Motor neuron (in vitro differentiated cells): ENCODE measurements at regions of chr14 and their contacts with region 1.

Region 1: GRCh38 chr14:77862154-77862786 is 62.4 kb downstream of the ADCK1 start:
- ATAC-seq: peak; percentile 70 to 91 (median 84)
- H3K4me3 ChIP-seq: no peak overlapping the region
- H3K27ac ChIP-seq: peak overlapping the region in 1 of 2 donors; percentile 18
- H3K4me1 ChIP-seq: peaks cover 8 to 12% of the 10 kb centered on the region in 2 donors

Region 2: GRCh38 chr14:77478796-77479195 is 383.5 kb before region 1 on chr14:
- in situ Hi-C with region 1: no loop called
- ATAC-seq: no peak
- H3K4me3 ChIP-seq: no peak overlapping the region
- H3K27ac ChIP-seq: no peak overlapping the region
- H3K4me1 ChIP-seq: no peaks in the 10 kb centered on the region

Region 3: GRCh38 chr14:77704740-77705139 is 157.5 kb before region 1 on chr14:
- in situ Hi-C with region 1: no loop called
- ATAC-seq: no peak
- H3K4me3 ChIP-seq: no peak overlapping the region
- H3K27ac ChIP-seq: no peak overlapping the region
- H3K4me1 ChIP-seq: peaks cover 14 to 15% of the 10 kb centered on the region in 2 donors

Region 4: DNA sequence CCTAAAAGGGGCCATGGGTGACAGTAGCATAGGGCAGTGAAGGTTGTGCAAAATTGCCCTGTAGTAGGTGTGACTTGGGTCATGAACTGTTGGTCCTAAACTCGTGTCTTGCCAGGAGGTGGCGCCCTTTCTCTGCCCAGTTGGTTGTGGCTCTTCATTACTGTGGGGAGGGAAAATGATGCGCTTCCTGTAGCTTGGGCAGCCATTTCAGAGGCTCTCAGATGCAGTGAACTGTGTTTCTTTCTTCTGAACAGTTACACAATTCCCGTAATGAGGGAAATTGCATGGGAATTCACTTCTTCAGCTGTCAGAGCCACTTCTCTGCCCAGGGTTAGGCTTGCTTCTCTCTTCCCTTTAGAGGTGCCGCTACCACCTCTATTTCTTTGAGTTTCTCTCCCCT is 159.8 kb after region 1 on chr14:
- in situ Hi-C with region 1: loop called in 1 of 9 experiments (anchors 25 kb)
- ATAC-seq: peak in 4 of 8 experiments; percentile 45 to 98 (median 95)
- H3K4me3 ChIP-seq: no peak overlapping the region
- H3K27ac ChIP-seq: no peak overlapping the region
- H3K4me1 ChIP-seq: peaks cover 0 to 3% of the 10 kb centered on the region in 2 donors

Region 5: DNA sequence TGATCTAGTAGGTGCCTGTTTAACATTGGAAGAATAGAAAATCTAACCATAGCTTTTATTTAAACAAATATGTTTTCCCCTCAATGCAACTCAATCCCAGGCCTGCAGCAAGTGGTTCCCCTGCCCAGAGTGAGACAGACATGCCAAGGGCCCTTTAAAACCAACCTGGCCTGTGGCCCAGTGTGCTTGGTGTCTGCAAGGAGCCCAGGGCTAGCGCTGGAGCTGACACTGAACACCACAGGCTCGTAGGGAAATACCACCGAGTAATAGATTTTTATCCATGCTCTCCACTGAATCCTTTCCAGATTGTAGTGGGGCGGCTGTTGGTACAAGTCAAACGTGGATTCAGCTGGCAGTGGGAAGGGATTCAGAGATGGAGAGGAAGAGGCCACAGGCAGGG is 212.3 kb after region 1 on chr14:
- in situ Hi-C with region 1: no loop called
- ATAC-seq: no peak
- H3K4me3 ChIP-seq: no peak overlapping the region
- H3K27ac ChIP-seq: no peak overlapping the region
- H3K4me1 ChIP-seq: peaks cover 3 to 12% of the 10 kb centered on the region in 2 donors

Region 6: GRCh38 chr14:78598041-78598920 is 736.0 kb after region 1 on chr14:
- in situ Hi-C with region 1: loop called in 2 of 9 experiments (anchors 25 kb)
- ATAC-seq: peak; percentile 84 to 99 (median 94)
- H3K4me3 ChIP-seq: no peak overlapping the region
- H3K27ac ChIP-seq: no peak overlapping the region
- H3K4me1 ChIP-seq: peaks cover 23 to 40% of the 10 kb centered on the region in 2 donors

Region 7: GRCh38 chr14:78605897-78606500 is 743.7 kb after region 1 on chr14:
- in situ Hi-C with region 1: loop called in 1 of 9 experiments (anchors 25 kb)
- ATAC-seq: peak in 3 of 8 experiments; percentile 45 to 89 (median 59)
- H3K4me3 ChIP-seq: no peak overlapping the region
- H3K27ac ChIP-seq: no peak overlapping the region
- H3K4me1 ChIP-seq: peaks cover 12 to 15% of the 10 kb centered on the region in 2 donors